Sigmoid colon (tissue), 7 donors: ENCODE measurements at regions of chr7 and their contacts with region 1.

Region 1: DNA sequence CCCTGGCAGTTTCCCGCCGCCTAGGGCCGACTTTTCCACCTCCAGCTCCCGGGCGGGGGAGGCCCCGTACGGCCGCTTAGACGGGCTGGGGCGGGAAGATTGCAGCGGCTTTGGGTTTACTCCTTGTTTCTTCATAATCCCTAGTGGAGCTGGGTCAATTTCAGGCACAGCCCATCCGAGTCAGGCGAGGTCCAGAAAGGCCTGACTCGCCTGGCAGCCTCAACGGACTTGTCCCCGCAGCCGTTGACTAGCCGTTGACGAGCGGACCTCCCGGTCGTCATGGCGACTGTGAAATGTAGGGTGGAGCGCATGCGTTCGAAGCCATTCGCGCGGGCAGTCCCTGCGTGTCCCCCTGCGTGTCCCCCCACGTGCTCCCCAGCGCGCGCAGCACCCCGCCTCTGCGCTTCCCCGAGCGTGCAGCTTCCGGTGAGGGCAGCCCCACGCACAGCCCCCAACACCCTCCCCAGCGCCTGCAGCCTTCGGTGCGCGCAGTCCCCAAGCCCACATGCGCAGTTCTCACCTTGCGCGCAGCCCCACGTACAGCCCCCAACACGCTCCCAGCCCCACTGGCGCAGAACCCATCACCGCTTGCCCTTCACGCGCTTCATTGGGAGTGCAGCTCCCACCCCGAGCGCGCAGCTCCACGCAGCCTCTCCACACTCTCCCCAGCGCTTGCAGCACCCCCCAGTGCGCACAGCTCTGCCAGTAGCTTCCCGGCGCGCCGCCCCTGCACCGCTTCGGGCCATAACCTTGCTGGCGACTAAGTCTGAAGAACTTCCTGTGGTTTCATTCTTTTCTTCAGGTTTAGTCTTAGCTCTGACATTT is 67.8 kb downstream of the TBX20 start:
- DNase-seq: peak; percentile 58
- H3K4me3 ChIP-seq: peak overlapping the region in 3 of 4 donors; percentile 23 to 47 (median 41)
- H3K27ac ChIP-seq: no peak overlapping the region
- H3K4me1 ChIP-seq: peaks cover 0 to 16% (median 14%) of the 10 kb centered on the region in 4 donors
- H3K27me3 ChIP-seq: peaks cover 8 to 21% (median 14%) of the 10 kb centered on the region in 3 donors
- CTCF ChIP-seq: no peak
- EP300 ChIP-seq: no peak
- POLR2A ChIP-seq: no peak

Region 2: DNA sequence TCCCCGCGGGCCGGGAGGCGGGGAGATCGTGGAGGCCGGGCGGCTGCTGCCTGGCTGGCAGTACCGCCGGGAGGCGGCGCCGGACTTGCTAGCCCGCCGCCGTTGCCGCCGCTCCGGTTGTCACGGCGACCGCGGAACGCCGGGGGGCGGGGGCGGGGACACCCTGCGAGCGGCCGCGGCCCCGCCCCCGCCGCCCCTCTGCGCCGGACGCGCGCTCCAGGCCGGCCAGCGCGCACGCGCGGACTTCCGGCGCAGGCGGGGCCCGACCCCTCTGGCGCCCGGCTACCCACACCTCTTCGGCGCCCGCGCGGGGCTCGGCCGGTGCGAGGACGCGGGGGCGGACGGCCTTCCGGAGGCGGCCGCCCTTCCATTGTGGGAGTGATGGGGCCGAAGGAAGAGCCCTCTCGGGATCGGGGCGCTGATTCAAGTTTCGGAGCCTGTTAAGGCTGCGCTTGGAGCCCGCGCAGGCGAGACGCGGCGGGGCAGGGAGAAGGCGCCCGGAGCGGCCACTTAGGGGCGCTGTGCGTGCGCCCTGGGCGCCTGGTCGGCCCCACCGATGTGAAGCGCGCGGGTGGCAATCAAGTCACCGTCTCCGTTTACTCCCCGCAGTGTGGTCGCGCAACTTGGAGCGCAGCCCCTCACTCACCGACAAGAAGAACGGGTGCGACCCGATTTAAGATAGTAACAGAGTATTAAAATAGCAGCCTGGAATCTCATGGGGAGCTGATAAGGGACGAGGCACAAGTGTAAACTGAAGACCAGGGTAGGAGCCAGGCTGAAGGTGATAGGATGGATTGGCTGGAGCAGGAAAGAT is 148.4 kb before region 1 on chr7:
- intact Hi-C with region 1: no loop called
- DNase-seq: peak; percentile 96
- H3K4me3 ChIP-seq: peak overlapping the region; percentile 57 to 71 (median 68)
- H3K27ac ChIP-seq: peak overlapping the region; percentile 88 to 94 (median 90)
- H3K4me1 ChIP-seq: peaks cover 0 to 24% (median 19%) of the 10 kb centered on the region in 4 donors
- H3K27me3 ChIP-seq: no peaks in the 10 kb centered on the region
- CTCF ChIP-seq: peak; percentile 70 to 81 (median 74)
- EP300 ChIP-seq: no peak
- POLR2A ChIP-seq: no peak

Region 3: GRCh38 chr7:35519971-35520809 is 334.1 kb after region 1 on chr7:
- intact Hi-C with region 1: loop called (anchors 10 kb)
- DNase-seq: peak; percentile 79
- H3K4me3 ChIP-seq: no peak overlapping the region
- H3K27ac ChIP-seq: no peak overlapping the region
- H3K4me1 ChIP-seq: no peaks in the 10 kb centered on the region
- H3K27me3 ChIP-seq: no peaks in the 10 kb centered on the region
- CTCF ChIP-seq: peak; percentile 41 to 66 (median 55)
- EP300 ChIP-seq: no peak
- POLR2A ChIP-seq: no peak